IMR-90 (cell line): ENCODE measurements at regions of chr6 and their contacts with region 1.

Region 1: DNA sequence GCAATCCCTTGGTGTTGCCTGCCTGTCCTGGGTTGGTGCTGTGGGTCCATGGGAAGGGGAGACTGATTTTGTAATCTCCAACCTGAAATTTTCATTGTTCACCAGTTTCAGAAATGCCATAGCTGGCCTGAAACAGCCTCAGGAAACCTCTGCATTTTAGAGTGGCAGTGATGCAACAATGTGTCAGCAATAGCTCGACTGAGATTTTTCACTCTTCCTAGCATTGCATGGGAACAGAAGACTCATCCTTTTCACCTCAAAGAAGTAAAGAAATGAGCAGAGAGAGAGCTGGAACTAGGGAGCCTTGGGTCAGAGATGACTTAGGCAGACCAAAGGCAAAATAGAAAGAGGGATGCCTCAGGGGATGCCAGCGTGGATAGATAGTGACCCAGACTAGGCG is 23.7 kb upstream of the TMEM14A start:
- DNase-seq: peak; percentile 72
- ATAC-seq: peak; percentile 22; the same call in 1 of the 2 replicates
- H3K4me3 ChIP-seq: no peak overlapping the region
- H3K27ac ChIP-seq: peak overlapping the region; percentile 16; the same call in 1 of the 2 replicates
- H3K4me1 ChIP-seq: peaks cover 9% of the 10 kb centered on the region
- H3K27me3 ChIP-seq: no peaks in the 10 kb centered on the region
- CTCF ChIP-seq: no peak
- POLR2A ChIP-seq: no peak
- RAD21 ChIP-seq: no peak

Region 2: GRCh38 chr6:52562915-52563314 is 84.3 kb before region 1 on chr6:
- CTCF ChIA-PET with region 1: no interaction called
- POLR2A ChIA-PET with region 1: no interaction called
- dilution Hi-C with region 1: no loop called
- in situ Hi-C with region 1: no loop called
- intact Hi-C with region 1: no loop called
- DNase-seq: no peak
- ATAC-seq: no peak
- H3K4me3 ChIP-seq: no peak overlapping the region
- H3K27ac ChIP-seq: no peak overlapping the region
- H3K4me1 ChIP-seq: peaks cover 40% of the 10 kb centered on the region
- H3K27me3 ChIP-seq: no peaks in the 10 kb centered on the region
- CTCF ChIP-seq: no peak
- POLR2A ChIP-seq: no peak
- RAD21 ChIP-seq: no peak

Region 3: DNA sequence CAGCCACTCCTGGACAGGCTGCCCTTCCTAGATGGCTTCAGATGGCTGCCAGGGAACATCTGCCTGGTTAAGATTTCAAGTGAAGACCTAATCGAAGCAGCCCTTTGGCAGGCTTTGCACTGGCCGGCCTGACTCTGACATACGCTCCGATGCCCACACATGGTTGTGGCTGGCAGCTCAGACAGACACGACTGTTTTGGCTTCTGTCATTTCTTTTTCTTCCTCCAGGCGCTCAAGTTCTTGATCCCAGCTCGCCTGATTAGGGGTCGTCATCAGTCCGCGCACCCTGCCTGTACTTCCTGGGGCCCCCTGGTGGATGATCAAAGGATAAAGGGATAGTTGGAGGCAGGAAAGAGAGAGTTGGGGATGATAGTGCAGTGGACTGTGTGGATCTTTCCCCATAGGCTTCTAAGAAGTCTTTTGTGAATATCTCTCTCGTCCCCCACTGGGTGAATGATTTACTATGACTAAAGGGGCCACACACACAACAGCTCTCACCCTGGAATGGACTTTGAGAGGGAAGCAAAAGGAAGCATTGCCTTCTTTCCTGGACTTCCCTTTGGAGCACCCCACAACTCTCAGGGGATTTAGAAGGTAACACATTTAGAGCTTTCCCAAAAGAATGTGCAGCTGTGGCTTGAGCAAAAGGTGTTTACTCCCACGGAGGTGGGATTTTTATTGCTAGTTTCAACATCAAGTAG is 48.9 kb before region 1 on chr6:
- CTCF ChIA-PET with region 1: interaction called, 7 read pairs
- POLR2A ChIA-PET with region 1: no interaction called
- dilution Hi-C with region 1: no loop called
- in situ Hi-C with region 1: no loop called
- intact Hi-C with region 1: loop called (anchors 1 kb)
- DNase-seq: peak; percentile 74
- ATAC-seq: peak; percentile 8; the same call in 1 of the 2 replicates
- H3K4me3 ChIP-seq: no peak overlapping the region
- H3K27ac ChIP-seq: peak overlapping the region; percentile 3; the same call in 1 of the 2 replicates
- H3K4me1 ChIP-seq: peaks cover 25% of the 10 kb centered on the region
- H3K27me3 ChIP-seq: no peaks in the 10 kb centered on the region
- CTCF ChIP-seq: peak; percentile 73
- POLR2A ChIP-seq: no peak
- RAD21 ChIP-seq: peak; percentile 71

Region 4: GRCh38 chr6:52610745-52611355 is 36.3 kb before region 1 on chr6:
- CTCF ChIA-PET with region 1: interaction called, 5 read pairs
- POLR2A ChIA-PET with region 1: no interaction called
- dilution Hi-C with region 1: no loop called
- in situ Hi-C with region 1: no loop called
- intact Hi-C with region 1: loop called (anchors 5 kb)
- DNase-seq: peak; percentile 72
- ATAC-seq: peak; percentile 50
- H3K4me3 ChIP-seq: no peak overlapping the region
- H3K27ac ChIP-seq: peak overlapping the region; percentile 63
- H3K4me1 ChIP-seq: peaks cover 20% of the 10 kb centered on the region
- H3K27me3 ChIP-seq: no peaks in the 10 kb centered on the region
- CTCF ChIP-seq: no peak
- POLR2A ChIP-seq: no peak
- RAD21 ChIP-seq: no peak

Region 5: DNA sequence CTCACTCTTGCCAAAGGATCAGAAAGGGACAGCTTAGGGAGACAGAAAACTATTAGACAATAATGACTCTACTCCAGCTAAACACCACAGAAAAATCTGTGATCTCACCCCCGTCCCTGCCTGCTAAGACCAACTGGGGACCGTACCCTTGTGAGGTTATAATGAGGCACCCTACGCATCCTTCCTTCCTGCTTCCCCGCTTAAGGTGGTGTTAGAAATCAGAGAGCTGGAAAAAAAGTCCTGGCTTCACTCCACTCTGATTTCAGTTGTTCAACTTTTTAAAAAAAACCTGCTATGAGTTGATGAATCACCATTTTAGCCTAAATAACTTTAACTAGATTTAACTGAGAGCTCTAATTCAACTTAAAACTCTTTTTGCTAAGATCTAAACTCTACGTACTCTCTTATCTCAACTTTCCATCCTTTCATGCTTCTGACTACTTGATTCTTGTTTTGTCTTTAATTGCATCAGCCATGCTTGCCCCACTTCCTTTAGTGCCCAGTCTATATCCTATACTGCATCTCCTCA is 12.1 kb before region 1 on chr6:
- CTCF ChIA-PET with region 1: interaction called, 14 read pairs
- POLR2A ChIA-PET with region 1: no interaction called
- dilution Hi-C with region 1: no loop called
- in situ Hi-C with region 1: no loop called
- intact Hi-C with region 1: no loop called
- DNase-seq: peak; percentile 46
- ATAC-seq: peak; percentile 63
- H3K4me3 ChIP-seq: no peak overlapping the region
- H3K27ac ChIP-seq: peak overlapping the region; percentile 69; the same call in 1 of the 2 replicates
- H3K4me1 ChIP-seq: peaks cover 4% of the 10 kb centered on the region
- H3K27me3 ChIP-seq: no peaks in the 10 kb centered on the region
- CTCF ChIP-seq: no peak
- POLR2A ChIP-seq: no peak
- RAD21 ChIP-seq: no peak